GM23248 (cell line): ENCODE measurements at regions of chr7 and their contacts with region 1.

Region 1: DNA sequence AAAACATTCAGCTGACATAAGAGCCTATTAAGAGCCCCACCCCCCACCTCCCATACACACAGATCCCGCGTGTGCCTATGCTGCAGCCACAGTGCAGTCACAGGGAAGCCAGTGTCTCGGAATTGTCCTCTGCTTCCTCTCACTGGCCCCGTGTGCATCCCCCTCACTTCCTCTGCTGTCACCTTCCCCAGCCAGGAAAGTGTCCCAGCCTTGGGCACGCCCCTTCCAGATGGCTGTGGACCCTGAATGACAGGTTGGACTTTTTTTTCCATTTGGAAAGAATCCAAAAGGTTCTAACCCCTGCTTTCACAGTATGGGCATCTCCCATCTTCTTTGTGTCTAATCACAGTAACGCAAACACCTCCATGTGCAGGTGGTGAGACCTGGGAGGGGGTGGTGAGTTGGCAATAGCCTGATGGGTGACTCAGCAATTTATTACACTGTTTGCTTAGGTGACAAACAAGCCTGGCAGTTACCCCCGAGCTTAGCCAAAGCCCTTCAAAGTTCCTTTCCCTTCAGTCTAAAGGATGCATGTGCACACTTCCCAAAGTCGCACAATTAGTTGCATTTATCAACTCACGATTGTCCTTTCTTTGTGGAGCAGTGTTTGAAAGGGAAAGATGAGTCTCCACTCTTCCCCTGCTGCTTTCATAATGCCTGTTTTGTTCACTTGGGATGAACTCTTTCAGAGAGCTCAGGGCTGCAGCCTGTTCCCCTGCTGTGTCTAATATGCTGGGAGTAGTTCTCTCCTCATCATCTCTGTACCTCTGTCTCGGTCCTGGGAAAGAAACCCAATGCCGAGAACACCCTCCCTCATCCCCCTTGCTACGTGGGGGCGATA is 67.5 kb upstream of the EFCAB10 start:
- DNase-seq: peak; percentile 35
- H3K4me3 ChIP-seq: no peak overlapping the region
- H3K27ac ChIP-seq: no peak overlapping the region
- H3K4me1 ChIP-seq: peaks cover 19% of the 10 kb centered on the region
- H3K27me3 ChIP-seq: no peaks in the 10 kb centered on the region

Region 2: DNA sequence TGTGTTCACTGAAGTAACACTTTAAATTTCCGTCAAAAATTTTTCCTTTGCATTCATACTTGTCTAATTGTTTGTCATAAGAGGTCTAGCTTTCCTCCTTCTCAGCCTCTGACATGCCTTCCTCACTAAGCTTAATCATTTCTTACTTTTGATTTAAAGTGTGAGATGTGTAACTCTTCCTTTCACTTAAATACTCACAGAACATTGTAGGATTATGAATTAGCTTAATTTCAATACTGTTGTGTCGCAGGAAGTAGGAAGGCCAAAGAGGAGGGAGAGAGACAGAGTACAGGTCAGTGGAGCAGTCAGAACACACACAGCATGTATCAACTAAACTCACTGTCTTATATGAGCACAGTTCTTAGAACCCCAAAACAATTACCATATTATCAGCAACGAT is 359.1 kb before region 1 on chr7:
- in situ Hi-C with region 1: no loop called
- DNase-seq: no peak
- H3K4me3 ChIP-seq: no peak overlapping the region
- H3K27ac ChIP-seq: no peak overlapping the region
- H3K4me1 ChIP-seq: no peaks in the 10 kb centered on the region
- H3K27me3 ChIP-seq: no peaks in the 10 kb centered on the region

Region 3: GRCh38 chr7:106041140-106041717 is 392.4 kb after region 1 on chr7:
- in situ Hi-C with region 1: loop called (anchors 10 kb)
- DNase-seq: peak; percentile 71
- H3K4me3 ChIP-seq: no peak overlapping the region
- H3K27ac ChIP-seq: no peak overlapping the region
- H3K4me1 ChIP-seq: peaks cover 36% of the 10 kb centered on the region
- H3K27me3 ChIP-seq: peaks cover 8% of the 10 kb centered on the region